Activated B cell treated with CpG ODN at 0.5 μM for 24 hours (primary cell): ENCODE measurements at regions of chr2 and their contacts with region 1.

Region 1: GRCh38 chr2:60998628-60999545 is 18.6 kb upstream of the PEX13 start:
- DNase-seq: no peak
- ATAC-seq: peak; percentile 70
- H3K4me3 Mint-ChIP-seq: no peak overlapping the region
- H3K27ac Mint-ChIP-seq: peak overlapping the region; percentile 75
- H3K4me1 Mint-ChIP-seq: peaks cover 42% of the 10 kb centered on the region
- H3K27me3 Mint-ChIP-seq: no peaks in the 10 kb centered on the region
- CTCF ChIP-seq: no peak

Region 2: DNA sequence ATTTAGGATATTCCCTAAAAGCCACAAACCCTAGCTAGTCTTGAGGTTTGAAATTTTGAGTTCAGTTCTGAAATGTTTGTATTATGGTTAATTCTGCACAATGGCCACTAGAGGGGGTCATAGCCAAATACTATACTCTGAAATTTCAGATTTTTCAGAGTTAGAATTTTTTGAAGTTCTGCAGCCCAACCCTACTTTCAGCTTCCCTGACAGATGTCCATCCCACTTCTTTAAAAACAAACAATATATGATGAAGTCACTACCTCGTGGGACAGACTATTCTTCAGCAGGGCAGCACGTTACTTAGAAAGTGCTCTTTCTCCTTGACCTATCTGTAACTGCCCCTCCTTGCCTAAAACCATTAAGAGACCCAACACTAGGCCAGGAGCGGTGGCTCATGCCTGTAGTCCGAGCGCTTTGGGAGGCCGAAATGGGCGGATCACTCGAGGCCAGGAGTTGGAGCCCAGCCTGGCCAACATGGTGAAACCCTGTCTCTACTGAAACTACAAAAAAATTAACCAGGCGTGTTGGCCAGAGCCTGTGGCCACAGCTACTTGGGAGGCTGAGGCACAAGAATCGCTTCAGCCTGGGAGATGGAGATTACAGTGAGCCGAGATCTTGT is 291.0 kb before region 1 on chr2:
- CTCF ChIA-PET with region 1: interaction called, 34 read pairs
- POLR2A ChIA-PET with region 1: interaction called, 8 read pairs
- intact Hi-C with region 1: loop called (anchors 1 kb)
- DNase-seq: no peak
- ATAC-seq: peak; percentile 28
- H3K4me3 Mint-ChIP-seq: no peak overlapping the region
- H3K27ac Mint-ChIP-seq: no peak overlapping the region
- H3K4me1 Mint-ChIP-seq: no peaks in the 10 kb centered on the region
- H3K27me3 Mint-ChIP-seq: peaks cover 5% of the 10 kb centered on the region
- CTCF ChIP-seq: no peak

Region 3: GRCh38 chr2:60806988-60807681 is 191.8 kb before region 1 on chr2:
- CTCF ChIA-PET with region 1: interaction called, 39 read pairs
- POLR2A ChIA-PET with region 1: interaction called, 29 read pairs
- intact Hi-C with region 1: loop called (anchors 1 kb)
- DNase-seq: peak; percentile 34
- ATAC-seq: peak; percentile 93
- H3K4me3 Mint-ChIP-seq: peak overlapping the region; percentile 59
- H3K27ac Mint-ChIP-seq: peak overlapping the region; percentile 93
- H3K4me1 Mint-ChIP-seq: peaks cover 54% of the 10 kb centered on the region
- H3K27me3 Mint-ChIP-seq: no peaks in the 10 kb centered on the region
- CTCF ChIP-seq: no peak

Region 4: DNA sequence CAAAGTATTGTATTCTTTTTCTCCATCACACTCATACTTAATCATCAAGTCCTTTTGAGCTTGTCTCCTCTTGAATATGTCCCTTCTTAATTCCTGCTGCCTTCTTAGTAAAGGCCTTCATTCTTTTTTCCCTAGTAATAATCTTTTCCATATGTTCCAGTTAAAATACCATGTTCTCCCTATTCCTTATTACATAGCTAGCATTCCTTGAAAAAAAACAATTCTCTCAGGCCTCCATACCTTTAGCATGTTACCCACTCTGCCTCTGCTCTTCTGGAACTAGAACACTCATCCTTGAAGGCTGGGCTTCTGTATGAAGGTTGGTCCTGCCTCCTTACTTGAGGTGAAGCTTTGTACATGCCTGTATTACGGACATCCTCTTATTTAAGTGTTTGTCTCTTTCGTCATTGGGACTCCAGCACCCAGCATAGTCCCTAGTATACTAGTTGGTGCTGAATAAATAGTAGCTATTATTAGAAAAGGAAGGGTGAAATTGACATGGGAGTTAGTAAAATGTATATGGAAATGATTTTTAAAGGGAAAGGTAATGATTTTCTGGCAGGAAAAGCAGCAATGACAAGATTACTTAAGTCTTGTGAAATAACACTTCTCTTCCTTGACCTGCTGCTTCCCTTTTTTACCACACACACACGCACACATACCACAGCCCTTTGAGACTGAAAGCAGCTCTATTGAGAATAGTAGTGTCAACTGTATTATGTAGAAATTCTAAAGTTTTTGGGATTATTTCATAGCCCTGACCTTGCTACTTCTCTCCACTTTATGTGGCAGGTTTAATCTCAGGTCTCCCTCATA is 71.9 kb before region 1 on chr2:
- CTCF ChIA-PET with region 1: interaction called, 11 read pairs
- POLR2A ChIA-PET with region 1: interaction called, 9 read pairs
- intact Hi-C with region 1: loop called (anchors 2 kb)
- DNase-seq: no peak
- ATAC-seq: peak; percentile 65
- H3K4me3 Mint-ChIP-seq: peak overlapping the region; percentile 4
- H3K27ac Mint-ChIP-seq: peak overlapping the region; percentile 62
- H3K4me1 Mint-ChIP-seq: peaks cover 32% of the 10 kb centered on the region
- H3K27me3 Mint-ChIP-seq: no peaks in the 10 kb centered on the region
- CTCF ChIP-seq: no peak

Region 5: DNA sequence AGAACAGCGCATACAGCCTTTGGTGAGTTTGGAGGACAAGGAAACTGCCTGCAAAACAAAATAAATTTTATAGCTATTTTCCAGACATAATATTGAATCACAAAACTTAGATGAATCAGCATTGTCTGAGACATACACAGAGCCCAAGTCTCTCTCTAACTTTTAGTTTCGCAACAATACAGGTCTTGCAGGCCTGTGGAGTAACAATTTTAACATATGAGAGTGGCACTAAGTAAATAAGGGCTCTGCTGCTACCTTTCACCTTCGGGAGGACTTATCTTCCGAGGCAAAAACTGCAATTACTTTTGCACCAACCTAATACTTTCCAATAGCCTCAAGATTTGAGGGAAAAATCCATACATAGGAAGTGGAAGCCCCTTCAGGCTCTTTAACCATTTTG is 37.4 kb before region 1 on chr2:
- CTCF ChIA-PET with region 1: interaction called, 11 read pairs
- POLR2A ChIA-PET with region 1: interaction called, 48 read pairs
- intact Hi-C with region 1: loop called (anchors 5 kb)
- DNase-seq: no peak
- ATAC-seq: no peak
- H3K4me3 Mint-ChIP-seq: no peak overlapping the region
- H3K27ac Mint-ChIP-seq: no peak overlapping the region
- H3K4me1 Mint-ChIP-seq: peaks cover 36% of the 10 kb centered on the region
- H3K27me3 Mint-ChIP-seq: no peaks in the 10 kb centered on the region
- CTCF ChIP-seq: no peak